ENCODE measurements at regions of chr9 and their contacts with region 1.

Region 1: GRCh38 chr9:3569529-3569928 is 43.7 kb upstream of the RFX3 start:
- DNase-seq: no peak
- ATAC-seq: no peak
- H3K4me3 ChIP-seq: no peak overlapping the region
- H3K4me3 Mint-ChIP-seq: no peak overlapping the region
- H3K27ac ChIP-seq: no peak overlapping the region
- H3K27ac Mint-ChIP-seq: no peak overlapping the region
- H3K4me1 ChIP-seq: no peaks in the 10 kb centered on the region
- H3K4me1 Mint-ChIP-seq: no peaks in the 10 kb centered on the region
- H3K27me3 ChIP-seq: no peaks in the 10 kb centered on the region
- H3K27me3 Mint-ChIP-seq: no peaks in the 10 kb centered on the region
- CTCF ChIP-seq: no peak

Region 2: GRCh38 chr9:3256571-3257330 is 312.8 kb before region 1 on chr9:
- CTCF ChIA-PET with region 1: no interaction called
- POLR2A ChIA-PET with region 1: no interaction called
- intact Hi-C with region 1: loop called in 1 of 2 experiments (anchors 10 kb)
- DNase-seq: no peak
- ATAC-seq: no peak
- H3K4me3 ChIP-seq: no peak overlapping the region
- H3K4me3 Mint-ChIP-seq: no peak overlapping the region
- H3K27ac ChIP-seq: no peak overlapping the region
- H3K27ac Mint-ChIP-seq: no peak overlapping the region
- H3K4me1 ChIP-seq: no peaks in the 10 kb centered on the region
- H3K4me1 Mint-ChIP-seq: no peaks in the 10 kb centered on the region
- H3K27me3 ChIP-seq: no peaks in the 10 kb centered on the region
- H3K27me3 Mint-ChIP-seq: no peaks in the 10 kb centered on the region
- CTCF ChIP-seq: no peak